ENCODE measurements at regions of chr11 and their contacts with region 1.

Region 1: GRCh38 chr11:65040847-65041621 is at the start of gene SAC3D1:
- DNase-seq: peak; percentile 87 to 91 (median 90)
- H3K4me3 ChIP-seq: peak within 1 kb of the TSS; percentile 61 to 64
- H3K4me3 Mint-ChIP-seq: peak within 1 kb of the TSS; percentile 92 to 97 (median 94)
- H3K27ac ChIP-seq: peak within 1 kb of the TSS; percentile 61
- H3K27ac Mint-ChIP-seq: peak within 1 kb of the TSS; percentile 87 to 97 (median 95)
- H3K4me1 ChIP-seq: peaks cover 25% of the 10 kb centered on the region
- H3K4me1 Mint-ChIP-seq: peaks cover 5 to 24% (median 15%) of the 10 kb centered on the region in 4 donors
- H3K27me3 ChIP-seq: no peaks in the 10 kb centered on the region
- H3K27me3 Mint-ChIP-seq: no peaks in the 10 kb centered on the region
- total RNA-seq, gene SAC3D1: 9.4 to 10.5 TPM

Region 2: DNA sequence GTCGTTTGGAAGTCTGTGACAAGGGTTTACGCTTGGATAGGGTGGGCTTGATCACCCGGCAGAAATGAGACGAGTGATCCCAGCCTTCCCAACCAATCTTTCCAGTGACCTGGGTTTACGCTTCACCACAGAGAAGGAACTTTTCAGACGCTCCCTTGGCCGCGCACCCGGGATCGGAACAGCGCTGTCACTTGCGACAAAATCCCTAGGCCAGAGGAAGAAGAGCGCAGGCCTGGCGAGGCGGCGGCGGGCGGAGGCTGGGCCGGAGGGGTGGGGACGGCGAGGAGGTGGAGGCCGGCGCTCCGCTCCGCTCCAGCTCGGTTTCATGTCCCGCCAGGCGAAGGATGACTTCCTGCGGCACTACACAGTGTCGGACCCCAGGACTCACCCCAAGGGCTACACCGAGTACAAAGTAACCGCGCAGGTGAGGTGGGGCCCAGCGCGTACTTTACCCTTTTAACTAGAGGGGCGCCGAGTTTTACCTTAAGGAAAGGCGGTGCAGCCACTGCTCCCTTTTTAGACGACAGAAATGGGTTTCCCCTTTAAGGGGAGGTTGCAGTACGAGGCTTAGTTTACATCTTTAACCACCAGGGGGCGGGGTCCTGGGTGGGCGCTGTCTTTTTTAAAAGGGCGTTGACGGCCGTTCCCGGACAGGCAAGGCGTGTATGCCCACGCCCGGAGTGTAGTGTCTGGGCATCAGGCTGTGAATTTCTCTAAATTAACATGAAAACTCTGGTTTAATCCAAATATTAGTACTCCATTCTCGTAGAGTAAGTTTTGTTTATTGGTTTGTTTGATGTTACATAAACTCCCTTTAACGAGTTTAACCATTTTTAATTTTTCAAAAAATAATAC is 13.6 kb before region 1 on chr11 and contains the start of gene SNX15:
- CTCF ChIA-PET with region 1: interaction called, 11 read pairs
- POLR2A ChIA-PET with region 1: interaction called, 42 read pairs
- intact Hi-C with region 1: loop called (anchors 1 kb)
- DNase-seq: peak; percentile 94 to 96 (median 95)
- H3K4me3 ChIP-seq: peak within 1 kb of the TSS in 1 of 2 donors; percentile 52
- H3K4me3 Mint-ChIP-seq: peak within 1 kb of the TSS; percentile 69 to 88 (median 81)
- H3K27ac ChIP-seq: peak within 1 kb of the TSS; percentile 61
- H3K27ac Mint-ChIP-seq: peak within 1 kb of the TSS; percentile 88 to 96 (median 91)
- H3K4me1 ChIP-seq: peaks cover 19% of the 10 kb centered on the region
- H3K4me1 Mint-ChIP-seq: peaks cover 9 to 30% (median 17%) of the 10 kb centered on the region in 4 donors
- H3K27me3 ChIP-seq: no peaks in the 10 kb centered on the region
- H3K27me3 Mint-ChIP-seq: no peaks in the 10 kb centered on the region
- total RNA-seq, gene SNX15: 24.5 to 26.7 TPM

Region 3: DNA sequence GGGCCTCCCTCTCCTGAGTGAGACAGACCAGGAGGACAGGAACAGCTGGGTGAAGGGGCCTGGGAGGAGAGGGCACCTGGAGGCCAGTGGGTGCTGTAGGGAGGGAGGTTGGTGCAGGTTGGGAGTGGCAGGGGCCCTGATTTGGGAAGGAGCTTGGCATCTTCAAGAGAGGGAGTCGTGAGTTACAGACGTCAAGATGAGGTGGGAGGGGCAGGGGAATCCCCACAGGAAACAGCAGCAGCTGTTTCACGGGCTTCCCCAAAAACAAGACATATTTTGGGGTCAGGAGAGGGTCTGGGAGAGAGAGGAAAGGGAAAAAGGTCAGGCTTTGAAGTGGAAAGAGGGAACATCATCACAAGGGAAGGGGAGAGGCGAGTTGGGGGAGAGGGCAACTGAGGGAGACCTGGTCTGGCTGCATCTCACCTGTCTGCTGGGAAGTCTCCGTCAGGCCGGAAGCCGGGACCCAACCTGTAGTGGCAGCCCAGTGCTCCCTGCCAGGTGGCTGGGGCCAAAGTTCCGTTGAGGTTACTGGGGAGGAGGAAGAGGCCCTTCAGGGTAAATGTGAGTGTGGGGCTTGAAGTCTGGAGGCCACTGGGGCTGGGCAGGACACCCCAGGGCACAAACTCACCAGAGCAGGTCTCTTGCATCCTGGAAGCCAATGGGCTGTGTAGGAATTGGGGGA is 12.9 kb after region 1 on chr11:
- CTCF ChIA-PET with region 1: interaction called, 3 read pairs
- POLR2A ChIA-PET with region 1: interaction called, 14 read pairs
- intact Hi-C with region 1: no loop called
- DNase-seq: peak; percentile 24 to 56 (median 38)
- H3K4me3 ChIP-seq: no peak overlapping the region
- H3K4me3 Mint-ChIP-seq: peak overlapping the region in 7 of 8 donors; percentile 56 to 85 (median 67)
- H3K27ac ChIP-seq: peak overlapping the region; percentile 35
- H3K27ac Mint-ChIP-seq: peak overlapping the region; percentile 76 to 96 (median 90)
- H3K4me1 ChIP-seq: peaks cover 16% of the 10 kb centered on the region
- H3K4me1 Mint-ChIP-seq: peaks cover 10 to 14% (median 14%) of the 10 kb centered on the region in 4 donors
- H3K27me3 ChIP-seq: no peaks in the 10 kb centered on the region
- H3K27me3 Mint-ChIP-seq: no peaks in the 10 kb centered on the region

Region 4: DNA sequence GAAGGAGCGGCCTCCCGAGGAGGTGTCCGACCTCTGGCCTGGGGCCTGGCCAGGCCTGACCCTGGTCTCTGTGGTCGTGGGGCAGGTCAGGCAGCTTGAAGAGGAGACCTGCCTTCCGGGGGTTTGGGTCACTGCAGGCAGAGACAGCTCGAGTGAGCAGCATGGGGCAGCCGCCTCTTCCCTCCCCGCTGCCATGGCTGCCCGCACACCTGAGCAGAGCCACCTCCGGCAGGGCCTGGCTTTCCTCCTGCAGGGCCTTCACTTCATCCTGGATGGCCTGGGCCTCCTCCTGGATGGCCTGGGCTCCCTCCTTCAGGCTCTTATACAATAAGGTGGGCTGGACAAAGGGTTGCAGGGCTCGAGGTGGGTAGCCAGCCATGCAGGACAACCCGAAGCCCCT is 25.3 kb after region 1 on chr11:
- CTCF ChIA-PET with region 1: no interaction called
- POLR2A ChIA-PET with region 1: no interaction called
- intact Hi-C with region 1: no loop called
- DNase-seq: no peak
- H3K4me3 ChIP-seq: no peak overlapping the region
- H3K4me3 Mint-ChIP-seq: no peak overlapping the region
- H3K27ac ChIP-seq: no peak overlapping the region
- H3K27ac Mint-ChIP-seq: no peak overlapping the region
- H3K4me1 ChIP-seq: no peaks in the 10 kb centered on the region
- H3K4me1 Mint-ChIP-seq: no peaks in the 10 kb centered on the region
- H3K27me3 ChIP-seq: no peaks in the 10 kb centered on the region
- H3K27me3 Mint-ChIP-seq: no peaks in the 10 kb centered on the region

Region 5: DNA sequence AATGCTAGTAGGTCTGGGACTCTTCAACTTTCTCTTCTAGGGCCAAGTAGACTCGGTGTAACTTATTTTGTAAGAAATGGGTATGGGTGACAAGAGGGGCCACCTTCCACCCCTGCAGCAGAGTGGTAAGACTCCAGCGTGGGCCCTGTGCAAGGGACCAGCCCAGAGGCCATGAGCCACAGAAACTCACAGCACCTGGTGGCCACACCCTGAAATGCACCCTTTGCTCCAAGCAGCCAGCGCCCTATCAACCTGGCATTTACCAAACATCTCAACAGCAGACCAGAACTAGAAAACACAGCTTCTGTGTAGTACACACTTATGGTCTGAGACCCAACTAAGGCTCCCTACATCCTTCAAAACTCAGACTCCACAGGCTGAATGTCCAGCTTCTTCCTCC is 37.1 kb after region 1 on chr11:
- CTCF ChIA-PET with region 1: interaction called, 8 read pairs
- POLR2A ChIA-PET with region 1: interaction called, 7 read pairs
- intact Hi-C with region 1: loop called (anchors 1 kb)
- DNase-seq: peak; percentile 71 to 75 (median 72)
- H3K4me3 ChIP-seq: no peak overlapping the region
- H3K4me3 Mint-ChIP-seq: peak overlapping the region in 2 of 8 donors; percentile 9 to 30
- H3K27ac ChIP-seq: peak overlapping the region; percentile 35
- H3K27ac Mint-ChIP-seq: peak overlapping the region; percentile 42 to 93 (median 81)
- H3K4me1 ChIP-seq: peaks cover 18% of the 10 kb centered on the region
- H3K4me1 Mint-ChIP-seq: peaks cover 4 to 22% (median 12%) of the 10 kb centered on the region in 4 donors
- H3K27me3 ChIP-seq: no peaks in the 10 kb centered on the region
- H3K27me3 Mint-ChIP-seq: no peaks in the 10 kb centered on the region

Region 6: GRCh38 chr11:65083834-65084597 is 43.0 kb after region 1 on chr11 and contains the starts of genes CDCA5 and ZFPL1:
- CTCF ChIA-PET with region 1: interaction called, 8 read pairs
- POLR2A ChIA-PET with region 1: interaction called, 6 read pairs
- intact Hi-C with region 1: loop called (anchors 1 kb)
- DNase-seq: peak; percentile 94 to 98 (median 97)
- H3K4me3 ChIP-seq: peak within 1 kb of the TSS; percentile 74 to 75
- H3K4me3 Mint-ChIP-seq: peak within 1 kb of the TSS; percentile 92 to 96 (median 94)
- H3K27ac ChIP-seq: peak within 1 kb of the TSS; percentile 94
- H3K27ac Mint-ChIP-seq: peak within 1 kb of the TSS; percentile 97 to 99 (median 98)
- H3K4me1 ChIP-seq: peaks cover 25% of the 10 kb centered on the region
- H3K4me1 Mint-ChIP-seq: peaks cover 9 to 42% (median 26%) of the 10 kb centered on the region in 4 donors
- H3K27me3 ChIP-seq: no peaks in the 10 kb centered on the region
- H3K27me3 Mint-ChIP-seq: no peaks in the 10 kb centered on the region
- total RNA-seq, gene CDCA5: 0.41 to 0.64 TPM
- total RNA-seq, gene ZFPL1: 48.6 to 51.9 TPM

Region 7: DNA sequence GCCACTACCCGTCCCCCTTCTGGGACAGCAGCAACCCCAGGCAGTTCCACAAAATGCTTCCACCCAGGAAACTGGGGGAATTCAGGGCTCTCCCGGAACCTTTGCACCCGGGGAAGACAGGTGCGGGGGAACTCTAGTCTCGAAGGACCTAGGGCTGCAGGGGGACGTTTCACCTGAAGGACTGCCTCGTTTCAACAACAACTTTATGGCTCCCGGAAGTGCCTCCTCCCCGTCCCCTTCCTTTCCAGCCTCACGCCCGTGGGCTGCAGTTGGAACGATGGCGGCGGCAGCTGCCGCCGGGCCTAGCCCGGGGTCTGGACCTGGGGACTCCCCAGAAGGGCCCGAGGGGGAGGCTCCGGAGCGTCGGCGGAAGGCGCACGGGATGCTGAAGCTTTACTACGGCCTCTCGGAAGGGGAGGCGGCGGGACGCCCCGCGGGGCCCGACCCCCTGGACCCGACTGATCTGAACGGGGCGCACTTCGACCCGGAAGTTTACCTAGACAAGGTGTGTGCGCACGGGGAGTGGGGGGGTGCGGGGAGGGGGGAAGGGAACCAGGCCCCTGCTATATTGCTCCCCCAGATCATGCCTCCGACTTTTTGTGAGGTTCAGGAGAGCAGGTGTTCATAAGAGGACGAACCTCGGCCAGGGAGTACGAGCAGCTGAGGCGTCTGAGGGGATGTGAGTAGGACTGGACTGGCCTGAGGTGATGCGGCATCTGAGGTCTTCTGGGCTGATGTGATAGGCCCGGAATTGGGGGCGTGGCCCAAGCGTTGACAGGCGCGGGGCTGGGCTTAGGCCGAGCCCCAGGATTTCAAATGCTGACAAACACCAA is 55.2 kb after region 1 on chr11 and contains the start of gene VPS51:
- CTCF ChIA-PET with region 1: no interaction called
- POLR2A ChIA-PET with region 1: interaction called, 10 read pairs
- intact Hi-C with region 1: no loop called
- DNase-seq: peak; percentile 87 to 92 (median 89)
- H3K4me3 ChIP-seq: peak within 1 kb of the TSS; percentile 47 to 74
- H3K4me3 Mint-ChIP-seq: peak within 1 kb of the TSS; percentile 86 to 95 (median 93)
- H3K27ac ChIP-seq: peak within 1 kb of the TSS; percentile 78
- H3K27ac Mint-ChIP-seq: peak within 1 kb of the TSS; percentile 95 to 97 (median 96)
- H3K4me1 ChIP-seq: peaks cover 18% of the 10 kb centered on the region
- H3K4me1 Mint-ChIP-seq: peaks cover 8 to 26% (median 17%) of the 10 kb centered on the region in 4 donors
- H3K27me3 ChIP-seq: no peaks in the 10 kb centered on the region
- H3K27me3 Mint-ChIP-seq: no peaks in the 10 kb centered on the region
- total RNA-seq, gene VPS51: 221 to 226 TPM

Region 8: GRCh38 chr11:65134386-65135253 is 93.6 kb after region 1 on chr11 and contains the start of gene SYVN1:
- CTCF ChIA-PET with region 1: no interaction called
- POLR2A ChIA-PET with region 1: interaction called, 21 read pairs
- intact Hi-C with region 1: no loop called
- DNase-seq: peak; percentile 92 to 95 (median 94)
- H3K4me3 ChIP-seq: peak within 1 kb of the TSS; percentile 68 to 99
- H3K4me3 Mint-ChIP-seq: peak within 1 kb of the TSS; percentile 97 to 100 (median 98)
- H3K27ac ChIP-seq: peak within 1 kb of the TSS; percentile 99
- H3K27ac Mint-ChIP-seq: peak within 1 kb of the TSS; percentile 99 to 100 (median 100)
- H3K4me1 ChIP-seq: peaks cover 30% of the 10 kb centered on the region
- H3K4me1 Mint-ChIP-seq: peaks cover 23 to 48% (median 33%) of the 10 kb centered on the region in 4 donors
- H3K27me3 ChIP-seq: no peaks in the 10 kb centered on the region
- H3K27me3 Mint-ChIP-seq: no peaks in the 10 kb centered on the region
- total RNA-seq, gene SYVN1: 74.0 to 76.5 TPM